ENCODE measurements at regions of chr9 and their contacts with region 1.

Region 1: GRCh38 chr9:9299134-9299533 is 1313.7 kb downstream of the PTPRD start:
- DNase-seq: no peak
- H3K4me3 ChIP-seq: no peak overlapping the region
- H3K27ac ChIP-seq: no peak overlapping the region
- H3K4me1 ChIP-seq: no peaks in the 10 kb centered on the region
- H3K27me3 ChIP-seq: no peaks in the 10 kb centered on the region
- CTCF ChIP-seq: no peak
- EP300 ChIP-seq: no peak
- POLR2A ChIP-seq: no peak

Region 2: GRCh38 chr9:9352877-9353481 is 53.8 kb after region 1 on chr9:
- intact Hi-C with region 1: loop called in 1 of 4 experiments (anchors 2 kb)
- DNase-seq: no peak
- H3K4me3 ChIP-seq: no peak overlapping the region
- H3K27ac ChIP-seq: no peak overlapping the region
- H3K4me1 ChIP-seq: no peaks in the 10 kb centered on the region
- H3K27me3 ChIP-seq: no peaks in the 10 kb centered on the region
- CTCF ChIP-seq: no peak
- EP300 ChIP-seq: no peak
- POLR2A ChIP-seq: no peak

Measured in ovary (tissue), 10 donors.